ENCODE measurements at regions of chr7 and their contacts with region 1.

Region 1: GRCh38 chr7:151172273-151173141 is 5.0 kb upstream of the GBX1 start:
- DNase-seq: peak; percentile 1
- H3K4me3 ChIP-seq: no peak overlapping the region
- H3K27me3 ChIP-seq: peaks cover 25% of the 10 kb centered on the region
- CTCF ChIP-seq: peak; percentile 100

Region 2: GRCh38 chr7:150898475-150899011 is 274.0 kb before region 1 on chr7:
- CTCF ChIA-PET with region 1: interaction called, 4 read pairs
- POLR2A ChIA-PET with region 1: interaction called, 10 read pairs
- DNase-seq: no peak
- H3K4me3 ChIP-seq: no peak overlapping the region
- H3K27me3 ChIP-seq: peaks cover 4% of the 10 kb centered on the region
- CTCF ChIP-seq: peak; percentile 96

Region 3: GRCh38 chr7:150974468-150975391 is 197.8 kb before region 1 on chr7:
- CTCF ChIA-PET with region 1: no interaction called
- POLR2A ChIA-PET with region 1: no interaction called
- DNase-seq: no peak
- H3K4me3 ChIP-seq: peak overlapping the region; percentile 39
- H3K27me3 ChIP-seq: peaks cover 28% of the 10 kb centered on the region
- CTCF ChIP-seq: peak; percentile 29

Region 4: GRCh38 chr7:151157645-151158329 is 14.7 kb before region 1 on chr7:
- CTCF ChIA-PET with region 1: interaction called, 10 read pairs
- POLR2A ChIA-PET with region 1: no interaction called
- DNase-seq: no peak
- H3K4me3 ChIP-seq: no peak overlapping the region
- H3K27me3 ChIP-seq: peaks cover 19% of the 10 kb centered on the region
- CTCF ChIP-seq: no peak